Left ventricle myocardium inferior (tissue), 1 donor: ENCODE measurements at regions of chr10 and their contacts with region 1.

Region 1: GRCh38 chr10:25072786-25073185 is 56.4 kb downstream of the THNSL1 start:
- DNase-seq: no peak
- H3K4me3 ChIP-seq: no peak overlapping the region
- H3K27ac ChIP-seq: no peak overlapping the region
- H3K4me1 ChIP-seq: no peaks in the 10 kb centered on the region
- H3K27me3 ChIP-seq: no peaks in the 10 kb centered on the region
- CTCF ChIP-seq: no peak

Region 2: DNA sequence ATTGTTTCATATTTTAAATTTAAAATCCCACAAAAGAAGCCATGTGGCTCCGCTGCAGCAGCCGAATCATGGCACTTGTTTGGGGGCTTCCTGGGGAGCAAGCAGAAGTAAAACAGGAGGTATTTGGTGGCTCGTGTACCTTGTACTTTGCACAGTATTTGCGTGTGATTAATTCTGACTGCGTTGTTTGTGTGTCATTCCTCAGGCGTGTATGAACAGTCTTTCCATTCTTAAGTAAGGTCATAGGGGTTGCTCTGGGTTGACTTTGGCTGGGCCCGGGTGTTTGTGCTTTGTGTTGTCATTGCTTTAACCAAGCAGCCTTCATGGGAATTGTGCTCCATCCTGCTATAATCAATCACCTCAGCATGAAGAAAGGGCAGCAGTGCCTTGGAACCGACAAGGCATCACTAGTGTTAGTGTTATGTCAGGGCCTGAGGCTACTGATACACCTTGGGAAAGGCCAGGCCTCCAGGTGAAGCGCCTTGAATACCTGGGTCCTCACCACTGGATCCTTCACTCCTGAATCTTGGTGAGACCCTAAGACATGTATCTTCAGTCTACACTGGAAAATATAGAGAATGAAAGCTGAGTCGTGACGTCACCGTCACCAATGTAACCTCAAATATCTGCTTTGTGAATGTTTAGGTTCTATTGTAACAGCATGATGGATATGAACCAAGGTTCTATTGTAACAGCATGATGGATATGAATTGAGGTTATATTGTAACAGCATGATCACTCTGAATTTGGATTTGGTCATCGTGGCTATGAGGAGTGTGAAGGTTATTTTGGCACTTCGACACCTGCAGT is 531.3 kb before region 1 on chr10:
- intact Hi-C with region 1: no loop called
- DNase-seq: no peak
- H3K4me3 ChIP-seq: no peak overlapping the region
- H3K27ac ChIP-seq: no peak overlapping the region
- H3K4me1 ChIP-seq: no peaks in the 10 kb centered on the region
- H3K27me3 ChIP-seq: no peaks in the 10 kb centered on the region
- CTCF ChIP-seq: no peak

Region 3: DNA sequence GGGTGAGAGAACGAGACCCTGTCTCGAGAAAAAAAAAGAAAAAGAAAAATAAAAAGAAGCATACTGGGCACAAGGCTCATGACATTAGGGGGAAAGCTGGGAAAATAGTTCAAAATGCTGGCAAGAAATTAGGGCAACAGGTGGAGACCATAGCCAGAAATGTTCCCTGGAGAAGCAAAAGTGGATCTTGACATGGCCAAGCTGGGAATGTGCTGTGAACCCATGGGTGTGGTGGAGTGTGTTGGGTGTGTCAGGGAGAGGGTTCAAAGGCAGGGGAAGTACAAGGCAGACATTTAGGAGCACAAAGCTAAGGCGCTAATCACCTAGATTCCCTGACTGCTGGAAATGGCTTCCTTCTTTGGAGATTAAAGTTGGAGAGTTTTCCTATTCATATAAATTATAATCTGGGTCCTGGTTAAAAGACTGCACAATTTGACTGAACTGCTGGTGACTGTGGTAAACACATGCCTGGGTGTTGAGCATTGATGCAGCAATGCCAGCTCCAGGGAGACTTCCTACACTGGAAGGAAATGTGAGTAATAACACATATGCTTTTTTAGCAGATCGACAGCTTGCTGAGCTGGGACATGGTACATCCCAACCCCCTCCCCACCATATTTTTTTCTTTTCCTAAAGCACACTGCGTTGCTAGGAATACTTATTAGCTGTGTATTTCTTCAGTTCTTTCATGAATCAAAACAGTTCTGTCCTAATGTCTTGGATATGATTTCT is 279.0 kb before region 1 on chr10:
- intact Hi-C with region 1: no loop called
- DNase-seq: no peak
- H3K4me3 ChIP-seq: no peak overlapping the region
- H3K27ac ChIP-seq: no peak overlapping the region
- H3K4me1 ChIP-seq: no peaks in the 10 kb centered on the region
- H3K27me3 ChIP-seq: no peaks in the 10 kb centered on the region
- CTCF ChIP-seq: no peak

Region 4: GRCh38 chr10:25026463-25026862 is 46.3 kb before region 1 on chr10:
- intact Hi-C with region 1: loop called (anchors 5 kb)
- DNase-seq: no peak
- H3K4me3 ChIP-seq: no peak overlapping the region
- H3K27ac ChIP-seq: no peak overlapping the region
- H3K4me1 ChIP-seq: peaks cover 22% of the 10 kb centered on the region
- H3K27me3 ChIP-seq: no peaks in the 10 kb centered on the region
- CTCF ChIP-seq: peak; percentile 55